Panc1 (cell line): ENCODE measurements at regions of chr13 and their contacts with region 1.

Region 1: DNA sequence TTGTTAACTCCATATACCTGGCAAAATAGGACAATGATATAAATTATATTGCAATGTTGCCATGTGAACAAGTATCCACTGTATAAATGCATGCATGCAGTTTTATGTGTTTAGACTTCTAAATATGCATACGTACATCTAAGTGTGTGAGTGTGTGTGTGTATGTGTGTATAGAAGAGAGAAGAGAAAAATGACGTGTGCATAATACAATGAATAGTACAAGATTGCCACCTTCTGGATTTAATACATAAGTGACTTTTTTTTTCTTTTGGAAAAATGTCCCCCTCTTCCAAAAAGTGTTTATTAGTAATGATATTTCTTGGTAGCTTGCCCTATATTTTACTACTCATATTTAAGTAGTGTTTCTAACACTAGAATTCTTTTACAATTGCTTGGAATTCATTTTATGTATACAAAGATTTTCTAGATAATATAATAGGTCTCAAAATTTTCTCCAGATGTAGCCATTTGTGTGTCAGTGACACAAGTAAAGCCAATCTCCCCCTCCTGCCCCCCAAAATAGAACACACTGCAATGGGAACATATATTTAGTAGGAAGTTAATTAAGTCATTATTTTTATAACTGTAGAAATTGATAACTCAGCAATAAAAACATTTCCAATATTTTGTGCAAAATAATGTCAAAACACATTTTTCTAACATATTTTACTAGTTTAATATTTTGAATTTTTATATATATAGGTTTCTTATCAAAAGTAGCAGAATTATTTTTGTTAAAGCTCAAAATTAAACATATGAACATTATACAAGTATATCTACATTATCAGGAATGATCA is 783.3 kb upstream of the ATXN8OS start:
- DNase-seq: no peak
- ATAC-seq: no peak
- H3K4me3 ChIP-seq: no peak overlapping the region
- H3K27ac ChIP-seq: no peak overlapping the region
- H3K4me1 ChIP-seq: no peaks in the 10 kb centered on the region
- H3K27me3 ChIP-seq: no peaks in the 10 kb centered on the region
- CTCF ChIP-seq: peak; percentile 19; the same call in 1 of the 2 replicates

Region 2: GRCh38 chr13:68636784-68637183 is 687.5 kb before region 1 on chr13:
- CTCF ChIA-PET with region 1: no interaction called
- POLR2A ChIA-PET with region 1: no interaction called
- in situ Hi-C with region 1: no loop called
- intact Hi-C with region 1: loop called (anchors 10 kb)
- DNase-seq: no peak
- ATAC-seq: no peak
- H3K4me3 ChIP-seq: no peak overlapping the region
- H3K27ac ChIP-seq: no peak overlapping the region
- H3K4me1 ChIP-seq: no peaks in the 10 kb centered on the region
- H3K27me3 ChIP-seq: no peaks in the 10 kb centered on the region
- CTCF ChIP-seq: no peak

Region 3: GRCh38 chr13:69142101-69142500 is 182.2 kb before region 1 on chr13:
- CTCF ChIA-PET with region 1: no interaction called
- POLR2A ChIA-PET with region 1: no interaction called
- in situ Hi-C with region 1: no loop called
- intact Hi-C with region 1: no loop called
- DNase-seq: no peak
- ATAC-seq: no peak
- H3K4me3 ChIP-seq: no peak overlapping the region
- H3K27ac ChIP-seq: no peak overlapping the region
- H3K4me1 ChIP-seq: no peaks in the 10 kb centered on the region
- H3K27me3 ChIP-seq: no peaks in the 10 kb centered on the region
- CTCF ChIP-seq: no peak

Region 4: DNA sequence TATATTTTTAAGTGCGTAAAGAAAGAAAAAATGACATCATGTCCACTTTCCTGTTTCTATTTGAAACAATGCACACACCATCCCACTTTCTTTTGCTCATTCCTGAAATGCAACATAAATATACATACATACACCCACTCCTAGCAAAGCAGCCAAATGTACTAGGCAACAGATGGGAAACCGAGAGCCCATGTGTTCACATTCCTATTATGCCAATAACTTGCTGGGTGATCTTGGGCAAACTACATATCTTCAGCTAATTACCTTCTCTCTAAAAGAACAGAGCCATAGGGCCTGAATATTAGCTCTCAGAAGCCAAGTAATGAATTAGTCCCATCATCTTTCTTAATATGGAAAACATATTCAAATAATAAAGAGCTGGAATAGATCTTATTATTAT is 172.7 kb after region 1 on chr13:
- CTCF ChIA-PET with region 1: no interaction called
- POLR2A ChIA-PET with region 1: no interaction called
- in situ Hi-C with region 1: no loop called
- intact Hi-C with region 1: no loop called
- DNase-seq: no peak
- ATAC-seq: no peak
- H3K4me3 ChIP-seq: no peak overlapping the region
- H3K27ac ChIP-seq: no peak overlapping the region
- H3K4me1 ChIP-seq: no peaks in the 10 kb centered on the region
- H3K27me3 ChIP-seq: no peaks in the 10 kb centered on the region
- CTCF ChIP-seq: no peak